Dorsolateral prefrontal cortex (tissue), 120 donors: ENCODE measurements at regions of chr1 and their contacts with region 1.

Region 1: GRCh38 chr1:100860397-100860991 is 34.1 kb downstream of the EXTL2 start:
- DNase-seq: no peak
- H3K4me3 ChIP-seq: no peak overlapping the region
- H3K27ac ChIP-seq: no peak overlapping the region
- H3K27me3 ChIP-seq: peaks cover 0 to 2% (median 0%) of the 10 kb centered on the region in 45 donors
- CTCF ChIP-seq: no peak

Region 2: GRCh38 chr1:99662581-99663208 is 1197.8 kb before region 1 on chr1:
- intact Hi-C with region 1: no loop called
- DNase-seq: no peak
- H3K4me3 ChIP-seq: no peak overlapping the region
- H3K27ac ChIP-seq: peak overlapping the region in 21 of 59 donors; percentile 10 to 78 (median 36)
- H3K27me3 ChIP-seq: peaks cover 0 to 7% (median 0%) of the 10 kb centered on the region in 45 donors
- CTCF ChIP-seq: no peak

Region 3: GRCh38 chr1:100613817-100614559 is 246.5 kb before region 1 on chr1:
- intact Hi-C with region 1: loop called in 1 of 2 experiments (anchors 5 kb)
- DNase-seq: no peak
- H3K4me3 ChIP-seq: no peak overlapping the region
- H3K27ac ChIP-seq: no peak overlapping the region
- H3K27me3 ChIP-seq: peaks cover 0 to 11% (median 0%) of the 10 kb centered on the region in 45 donors
- CTCF ChIP-seq: no peak

Region 4: GRCh38 chr1:100896484-100896982 is 36.0 kb after region 1 on chr1:
- intact Hi-C with region 1: no loop called
- DNase-seq: peak in 1 of 10 donors; percentile 11
- H3K4me3 ChIP-seq: peak overlapping the region; percentile 68 to 98 (median 88)
- H3K27ac ChIP-seq: peak overlapping the region in 53 of 59 donors; percentile 70 to 97 (median 92)
- H3K27me3 ChIP-seq: no peaks in the 10 kb centered on the region
- CTCF ChIP-seq: no peak